Left cardiac atrium (tissue), 4 donors: ENCODE measurements at regions of chr19 and their contacts with region 1.

Region 1: DNA sequence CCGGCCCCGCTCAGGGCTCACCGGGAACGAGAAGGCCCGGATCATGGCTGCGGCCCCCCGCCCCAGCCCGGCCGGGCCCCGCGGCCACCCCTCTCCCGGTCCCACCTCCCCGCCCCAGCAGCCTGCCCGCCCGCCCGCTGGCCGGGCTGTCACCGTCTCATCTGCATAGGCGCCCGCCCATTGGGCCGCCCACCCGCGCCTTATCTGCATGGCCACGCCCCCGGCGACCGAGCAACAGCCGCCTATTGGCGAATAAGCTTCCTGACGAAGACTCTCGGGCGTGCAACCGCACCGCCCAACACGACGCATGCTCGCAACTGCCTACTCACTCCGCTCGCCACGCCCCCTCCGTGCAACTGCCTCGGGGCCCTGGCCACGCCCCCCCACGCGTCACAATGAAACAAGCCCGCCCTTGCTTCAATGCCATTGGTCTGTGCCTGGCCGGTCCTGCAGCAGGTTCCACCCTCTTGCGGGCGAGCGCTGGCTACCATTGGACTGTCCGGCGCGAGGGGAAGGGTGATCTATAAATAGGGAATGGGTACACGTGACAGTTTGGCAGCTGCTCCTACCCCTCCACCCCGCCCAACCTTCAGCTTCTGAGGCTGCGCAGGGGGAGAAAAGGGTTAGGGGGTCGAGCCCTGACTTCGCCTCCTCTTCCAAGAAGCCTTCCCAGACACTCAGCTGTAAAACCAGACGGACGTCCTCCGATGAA is at the start of gene DACT3:
- DNase-seq: peak; percentile 100
- ATAC-seq: peak; percentile 94 to 97
- total RNA-seq, gene DACT3: 15.1 to 15.4 TPM

Region 2: GRCh38 chr19:46596008-46596407 is 65.2 kb before region 1 on chr19:
- intact Hi-C with region 1: no loop called
- DNase-seq: no peak
- ATAC-seq: no peak

Region 3: GRCh38 chr19:46614114-46614722 is 47.0 kb before region 1 on chr19:
- intact Hi-C with region 1: loop called (anchors 1 to 10 kb)
- DNase-seq: peak; percentile 86
- ATAC-seq: peak; percentile 76 to 88

Region 4: GRCh38 chr19:46736544-46737297 is 75.5 kb after region 1 on chr19:
- intact Hi-C with region 1: no loop called
- DNase-seq: peak; percentile 62
- ATAC-seq: peak; percentile 8 to 42